Panc1 (cell line): ENCODE measurements at regions of chr10 and their contacts with region 1.

Region 1: DNA sequence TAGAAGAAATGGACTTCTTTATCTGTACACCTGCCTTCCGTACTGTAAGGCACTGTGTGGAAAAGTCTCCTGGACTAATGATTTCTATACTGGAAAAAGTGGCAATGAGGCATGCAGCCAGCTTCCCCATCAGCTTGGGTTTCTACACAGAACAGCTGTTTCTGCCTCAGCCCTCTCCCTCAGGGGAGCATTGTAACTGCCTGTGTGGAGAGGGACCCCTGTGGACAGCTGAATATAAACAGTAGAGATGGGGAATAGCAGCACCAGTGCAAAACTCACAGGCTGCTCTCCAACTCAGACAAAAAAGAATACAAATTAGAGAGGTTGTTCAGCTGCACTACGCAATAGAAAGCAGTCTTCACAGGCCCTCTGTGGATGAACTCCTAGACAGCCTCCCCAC is 451.3 kb upstream of the MBL2 start:
- DNase-seq: no peak
- ATAC-seq: no peak
- H3K4me3 ChIP-seq: no peak overlapping the region
- H3K27ac ChIP-seq: no peak overlapping the region
- H3K4me1 ChIP-seq: no peaks in the 10 kb centered on the region
- H3K27me3 ChIP-seq: no peaks in the 10 kb centered on the region
- CTCF ChIP-seq: no peak

Region 2: GRCh38 chr10:52940921-52941320 is 282.9 kb before region 1 on chr10:
- CTCF ChIA-PET with region 1: no interaction called
- POLR2A ChIA-PET with region 1: no interaction called
- in situ Hi-C with region 1: no loop called
- intact Hi-C with region 1: no loop called
- DNase-seq: no peak
- ATAC-seq: no peak
- H3K4me3 ChIP-seq: no peak overlapping the region
- H3K27ac ChIP-seq: no peak overlapping the region
- H3K4me1 ChIP-seq: no peaks in the 10 kb centered on the region
- H3K27me3 ChIP-seq: no peaks in the 10 kb centered on the region
- CTCF ChIP-seq: no peak

Region 3: GRCh38 chr10:53153831-53154230 is 70.0 kb before region 1 on chr10:
- CTCF ChIA-PET with region 1: no interaction called
- POLR2A ChIA-PET with region 1: interaction called, 10 read pairs
- in situ Hi-C with region 1: no loop called
- intact Hi-C with region 1: no loop called
- DNase-seq: no peak
- ATAC-seq: no peak
- H3K4me3 ChIP-seq: no peak overlapping the region
- H3K27ac ChIP-seq: no peak overlapping the region
- H3K4me1 ChIP-seq: no peaks in the 10 kb centered on the region
- H3K27me3 ChIP-seq: no peaks in the 10 kb centered on the region
- CTCF ChIP-seq: no peak

Region 4: DNA sequence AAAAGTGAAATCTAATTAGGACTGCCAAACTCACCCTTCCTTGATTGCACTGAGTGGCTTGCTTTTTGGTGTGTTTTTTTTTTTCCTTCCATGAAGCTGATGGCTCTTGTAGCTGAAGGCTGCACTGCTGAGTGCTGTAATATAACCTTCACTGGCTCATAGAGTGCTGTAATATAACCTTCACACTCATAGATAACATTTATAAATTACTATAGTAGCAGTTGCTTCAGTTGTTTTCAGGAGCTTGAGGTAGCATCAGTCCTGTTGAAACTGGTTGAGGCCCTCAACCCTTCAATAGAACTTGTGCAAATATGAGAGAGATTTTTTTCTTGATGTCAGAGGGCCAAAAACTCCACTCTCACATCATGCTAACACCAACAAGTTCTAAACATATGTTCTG is 46.4 kb before region 1 on chr10:
- CTCF ChIA-PET with region 1: no interaction called
- POLR2A ChIA-PET with region 1: no interaction called
- in situ Hi-C with region 1: no loop called
- intact Hi-C with region 1: no loop called
- DNase-seq: no peak
- ATAC-seq: no peak
- H3K4me3 ChIP-seq: no peak overlapping the region
- H3K27ac ChIP-seq: no peak overlapping the region
- H3K4me1 ChIP-seq: no peaks in the 10 kb centered on the region
- H3K27me3 ChIP-seq: no peaks in the 10 kb centered on the region
- CTCF ChIP-seq: no peak

Region 5: GRCh38 chr10:53453196-53453595 is 229.3 kb after region 1 on chr10:
- CTCF ChIA-PET with region 1: no interaction called
- POLR2A ChIA-PET with region 1: no interaction called
- in situ Hi-C with region 1: no loop called
- intact Hi-C with region 1: no loop called
- DNase-seq: no peak
- ATAC-seq: no peak
- H3K4me3 ChIP-seq: no peak overlapping the region
- H3K27ac ChIP-seq: no peak overlapping the region
- H3K4me1 ChIP-seq: no peaks in the 10 kb centered on the region
- H3K27me3 ChIP-seq: no peaks in the 10 kb centered on the region
- CTCF ChIP-seq: no peak